Transverse colon (tissue), 4 donors: ENCODE measurements at regions of chr9 and their contacts with region 1.

Region 1: DNA sequence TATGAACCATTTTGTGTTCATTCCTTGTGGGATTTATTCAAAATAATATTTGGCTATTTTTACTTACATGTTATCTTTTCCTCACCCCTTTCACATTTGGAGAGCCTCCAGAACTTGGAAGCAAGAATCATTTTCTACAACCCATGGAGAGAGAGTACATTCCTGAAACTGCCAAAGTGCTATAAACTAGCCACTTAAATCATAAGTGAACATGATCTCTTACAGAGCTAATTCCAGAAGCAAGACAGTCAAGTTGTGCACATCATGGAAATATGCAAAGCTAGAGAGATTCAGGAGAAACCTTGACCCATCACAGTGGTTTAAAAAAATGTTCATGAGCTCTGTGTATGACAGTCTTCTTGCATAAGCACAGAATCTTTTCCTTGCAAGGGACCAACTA is 883.6 kb upstream of the C9orf72 start:
- DNase-seq: no peak
- H3K4me3 ChIP-seq: no peak overlapping the region
- H3K27ac ChIP-seq: no peak overlapping the region
- H3K4me1 ChIP-seq: no peaks in the 10 kb centered on the region
- H3K27me3 ChIP-seq: no peaks in the 10 kb centered on the region
- CTCF ChIP-seq: no peak
- EP300 ChIP-seq: no peak
- POLR2A ChIP-seq: no peak

Region 2: GRCh38 chr9:28410411-28410810 is 46.5 kb before region 1 on chr9:
- in situ Hi-C with region 1: no loop called
- intact Hi-C with region 1: loop called (anchors 2 kb)
- DNase-seq: no peak
- H3K4me3 ChIP-seq: no peak overlapping the region
- H3K27ac ChIP-seq: no peak overlapping the region
- H3K4me1 ChIP-seq: no peaks in the 10 kb centered on the region
- H3K27me3 ChIP-seq: no peaks in the 10 kb centered on the region
- CTCF ChIP-seq: no peak
- EP300 ChIP-seq: no peak
- POLR2A ChIP-seq: no peak

Region 3: DNA sequence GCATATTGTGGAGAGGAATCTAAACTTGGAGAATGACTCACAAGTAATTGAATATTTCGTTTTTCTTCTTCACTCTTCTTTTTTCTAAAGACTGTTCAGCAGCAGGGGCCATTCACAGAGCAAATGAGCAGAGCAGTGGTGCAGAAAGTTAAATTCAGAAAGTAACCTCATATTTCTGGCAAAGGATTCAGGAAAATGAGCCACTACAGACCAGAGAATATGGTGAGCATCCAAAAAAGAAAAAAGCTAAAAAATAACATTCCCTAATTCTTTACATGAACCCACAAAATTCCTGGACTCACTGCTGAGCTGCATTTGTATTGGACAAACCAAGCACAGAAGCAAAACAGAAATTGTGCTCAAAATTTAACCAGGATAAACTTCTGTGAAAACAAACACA is 603.2 kb after region 1 on chr9:
- in situ Hi-C with region 1: no loop called
- intact Hi-C with region 1: no loop called
- DNase-seq: no peak
- H3K4me3 ChIP-seq: no peak overlapping the region
- H3K27ac ChIP-seq: no peak overlapping the region
- H3K4me1 ChIP-seq: no peaks in the 10 kb centered on the region
- H3K27me3 ChIP-seq: no peaks in the 10 kb centered on the region
- CTCF ChIP-seq: no peak
- EP300 ChIP-seq: no peak
- POLR2A ChIP-seq: no peak